IMR-90 (cell line): ENCODE measurements at regions of chr10 and their contacts with region 1.

Region 1: GRCh38 chr10:124961248-124961570 is 19.3 kb downstream of the ZRANB1 start:
- DNase-seq: peak; percentile 30
- ATAC-seq: no peak
- H3K4me3 ChIP-seq: no peak overlapping the region
- H3K27ac ChIP-seq: no peak overlapping the region
- H3K4me1 ChIP-seq: peaks cover 13% of the 10 kb centered on the region
- H3K27me3 ChIP-seq: no peaks in the 10 kb centered on the region
- CTCF ChIP-seq: no peak
- POLR2A ChIP-seq: no peak
- RAD21 ChIP-seq: no peak

Region 2: DNA sequence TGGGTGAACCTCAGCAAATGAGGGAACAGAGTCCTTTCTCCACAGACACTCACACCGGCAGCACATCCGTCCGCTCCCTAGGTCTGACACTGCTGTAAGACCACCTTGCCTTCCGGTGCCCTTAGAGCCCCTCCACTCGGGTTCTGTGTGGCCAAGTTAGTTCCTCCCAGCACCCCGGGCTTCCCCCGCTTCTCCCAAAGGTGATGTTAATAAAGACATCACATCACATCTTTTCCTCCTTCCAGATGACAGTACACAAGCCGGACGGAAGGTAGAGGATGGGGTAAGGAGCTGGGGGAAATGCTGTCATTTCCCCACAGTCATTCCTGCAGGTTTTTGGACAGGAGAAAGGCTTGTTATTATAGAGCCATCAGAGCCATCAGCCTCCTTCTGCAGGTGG is 584.8 kb before region 1 on chr10:
- CTCF ChIA-PET with region 1: no interaction called
- POLR2A ChIA-PET with region 1: no interaction called
- dilution Hi-C with region 1: no loop called
- in situ Hi-C with region 1: no loop called
- intact Hi-C with region 1: no loop called
- DNase-seq: no peak
- ATAC-seq: no peak
- H3K4me3 ChIP-seq: no peak overlapping the region
- H3K27ac ChIP-seq: no peak overlapping the region
- H3K4me1 ChIP-seq: no peaks in the 10 kb centered on the region
- H3K27me3 ChIP-seq: peaks cover 14% of the 10 kb centered on the region
- CTCF ChIP-seq: no peak
- POLR2A ChIP-seq: no peak
- RAD21 ChIP-seq: no peak

Region 3: GRCh38 chr10:124748166-124748565 is 213.0 kb before region 1 on chr10:
- CTCF ChIA-PET with region 1: no interaction called
- POLR2A ChIA-PET with region 1: no interaction called
- dilution Hi-C with region 1: no loop called
- in situ Hi-C with region 1: no loop called
- intact Hi-C with region 1: no loop called
- DNase-seq: no peak
- ATAC-seq: no peak
- H3K4me3 ChIP-seq: no peak overlapping the region
- H3K27ac ChIP-seq: no peak overlapping the region
- H3K4me1 ChIP-seq: peaks cover 6% of the 10 kb centered on the region
- H3K27me3 ChIP-seq: no peaks in the 10 kb centered on the region
- CTCF ChIP-seq: no peak
- POLR2A ChIP-seq: no peak
- RAD21 ChIP-seq: no peak

Region 4: GRCh38 chr10:124791378-124792348 is 169.5 kb before region 1 on chr10 and contains the start of gene EEF1AKMT2:
- CTCF ChIA-PET with region 1: no interaction called
- POLR2A ChIA-PET with region 1: no interaction called
- dilution Hi-C with region 1: no loop called
- in situ Hi-C with region 1: no loop called
- intact Hi-C with region 1: loop called (anchors 5 kb)
- DNase-seq: peak; percentile 82
- ATAC-seq: peak; percentile 99
- H3K4me3 ChIP-seq: peak within 1 kb of the TSS; percentile 87
- H3K27ac ChIP-seq: peak within 1 kb of the TSS; percentile 84
- H3K4me1 ChIP-seq: no peaks in the 10 kb centered on the region; the same call in 1 of the 2 replicates
- H3K27me3 ChIP-seq: no peaks in the 10 kb centered on the region
- CTCF ChIP-seq: no peak
- POLR2A ChIP-seq: peak; percentile 82; the same call in 1 of the 2 replicates
- RAD21 ChIP-seq: no peak; the same call in 1 of the 2 replicates
- total RNA-seq, gene EEF1AKMT2: 9.7 and 22.8 TPM in 2 replicates

Region 5: GRCh38 chr10:124975977-124976514 is 14.8 kb after region 1 on chr10:
- CTCF ChIA-PET with region 1: interaction called, 10 read pairs
- POLR2A ChIA-PET with region 1: no interaction called
- dilution Hi-C with region 1: no loop called
- in situ Hi-C with region 1: no loop called
- intact Hi-C with region 1: no loop called
- DNase-seq: no peak
- ATAC-seq: no peak
- H3K4me3 ChIP-seq: no peak overlapping the region
- H3K27ac ChIP-seq: no peak overlapping the region
- H3K4me1 ChIP-seq: peaks cover 4% of the 10 kb centered on the region
- H3K27me3 ChIP-seq: no peaks in the 10 kb centered on the region
- CTCF ChIP-seq: no peak
- POLR2A ChIP-seq: no peak
- RAD21 ChIP-seq: no peak